Panc1 (cell line): ENCODE measurements at regions of chr7 and their contacts with region 1.

Region 1: GRCh38 chr7:29145553-29146056 is 732 bp downstream of the CPVL start:
- DNase-seq: no peak
- ATAC-seq: no peak
- H3K4me3 ChIP-seq: peak overlapping the region in 1 of 2 experiments; percentile 31; a peak in 2 of 4 replicates
- H3K27ac ChIP-seq: no peak overlapping the region
- H3K4me1 ChIP-seq: peaks cover 6% of the 10 kb centered on the region; the same call in 1 of the 2 replicates
- H3K27me3 ChIP-seq: peaks cover 57% of the 10 kb centered on the region
- CTCF ChIP-seq: no peak

Region 2: DNA sequence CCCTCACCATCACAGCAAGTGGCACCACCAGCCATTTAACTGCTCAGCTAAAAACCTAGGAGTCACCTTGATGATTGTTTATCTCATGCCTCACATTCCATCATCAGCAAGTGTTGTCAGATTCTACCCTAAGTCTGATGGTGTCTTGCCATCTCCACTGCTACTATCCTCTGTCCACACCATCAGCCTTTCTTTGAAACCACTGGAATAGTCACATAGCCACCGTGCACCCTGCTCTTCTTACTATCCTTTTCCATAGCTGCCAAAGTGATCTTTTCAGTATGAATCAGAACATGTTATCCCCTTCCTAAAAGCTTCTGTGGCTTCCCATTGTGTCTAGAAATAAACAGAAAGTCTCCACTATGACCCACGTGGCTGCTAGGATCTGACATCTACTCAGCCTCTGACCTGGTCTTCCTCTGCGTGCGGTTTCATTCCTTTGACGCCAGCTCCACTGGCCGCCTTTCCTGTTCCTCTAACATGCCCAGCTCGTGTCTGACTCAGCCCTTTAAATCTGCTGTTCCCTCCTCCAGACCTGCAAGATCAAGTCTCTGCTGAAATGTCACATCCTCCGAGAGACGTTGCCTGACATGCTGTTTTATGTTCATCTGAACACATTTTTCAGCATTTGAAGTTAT is 32.5 kb after region 1 on chr7:
- CTCF ChIA-PET with region 1: no interaction called
- POLR2A ChIA-PET with region 1: interaction called, 24 read pairs
- in situ Hi-C with region 1: no loop called
- intact Hi-C with region 1: no loop called
- DNase-seq: no peak
- ATAC-seq: no peak
- H3K4me3 ChIP-seq: no peak overlapping the region
- H3K27ac ChIP-seq: no peak overlapping the region
- H3K4me1 ChIP-seq: no peaks in the 10 kb centered on the region
- H3K27me3 ChIP-seq: peaks cover 13% of the 10 kb centered on the region
- CTCF ChIP-seq: no peak